WTC11 (cell line): ENCODE measurements at regions of chr13 and their contacts with region 1.

Region 1: DNA sequence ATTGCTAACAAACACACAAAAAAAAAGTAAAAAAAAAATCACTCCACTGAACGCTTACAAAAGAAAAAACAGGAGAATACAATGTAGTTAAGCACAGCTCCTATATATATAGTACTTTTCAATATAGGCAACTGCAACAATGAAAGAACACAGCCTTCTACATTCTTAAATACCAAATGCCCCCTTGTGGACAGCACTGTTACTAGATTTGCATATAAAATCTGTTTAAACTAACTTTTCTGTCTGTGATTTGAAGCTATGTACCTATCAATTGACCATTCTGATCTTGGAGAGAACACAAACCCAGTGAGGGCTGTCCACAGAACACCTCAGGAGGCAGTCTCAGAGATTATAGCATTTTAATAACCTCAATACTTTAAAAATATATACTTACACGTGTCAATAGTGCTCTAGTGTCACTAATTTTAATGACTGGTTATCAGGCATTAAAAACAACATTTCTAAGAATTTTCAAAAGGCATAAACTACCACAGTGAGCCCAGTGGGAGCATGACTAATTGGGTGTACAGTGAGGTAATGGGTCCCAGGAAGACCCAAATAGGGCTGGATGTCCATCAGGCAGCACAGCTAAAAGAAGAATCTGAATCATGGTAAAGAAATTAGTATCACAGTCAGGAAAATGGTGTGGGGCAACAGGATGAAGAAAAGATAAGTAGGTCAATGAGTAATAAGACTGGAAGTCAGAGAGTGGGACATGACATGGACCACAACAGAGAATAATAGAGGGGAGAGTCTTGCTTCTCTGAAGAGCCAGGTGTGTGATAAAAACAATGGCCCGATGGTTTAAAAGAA is 22.2 kb downstream of the CCDC169 start:
- DNase-seq: no peak
- ATAC-seq: 0 out of 2 replicates have a peak, but pooled peaks have one; percentile 57
- H3K4me3 Mint-ChIP-seq: no peak overlapping the region
- H3K27ac Mint-ChIP-seq: no peak overlapping the region
- H3K4me1 Mint-ChIP-seq: peaks cover 2% of the 10 kb centered on the region
- H3K27me3 Mint-ChIP-seq: no peaks in the 10 kb centered on the region
- CTCF ChIP-seq: peak; percentile 55; the same call in 1 of the 2 replicates

Region 2: GRCh38 chr13:35978603-35979316 is 296.6 kb before region 1 on chr13:
- CTCF ChIA-PET with region 1: interaction called, 43 read pairs
- POLR2A ChIA-PET with region 1: no interaction called
- DNase-seq: peak; percentile 27
- ATAC-seq: peak; percentile 49; the same call in 1 of the 2 replicates
- H3K4me3 Mint-ChIP-seq: no peak overlapping the region
- H3K27ac Mint-ChIP-seq: no peak overlapping the region
- H3K4me1 Mint-ChIP-seq: peaks cover 16% of the 10 kb centered on the region
- H3K27me3 Mint-ChIP-seq: no peaks in the 10 kb centered on the region
- CTCF ChIP-seq: peak; percentile 85

Region 3: DNA sequence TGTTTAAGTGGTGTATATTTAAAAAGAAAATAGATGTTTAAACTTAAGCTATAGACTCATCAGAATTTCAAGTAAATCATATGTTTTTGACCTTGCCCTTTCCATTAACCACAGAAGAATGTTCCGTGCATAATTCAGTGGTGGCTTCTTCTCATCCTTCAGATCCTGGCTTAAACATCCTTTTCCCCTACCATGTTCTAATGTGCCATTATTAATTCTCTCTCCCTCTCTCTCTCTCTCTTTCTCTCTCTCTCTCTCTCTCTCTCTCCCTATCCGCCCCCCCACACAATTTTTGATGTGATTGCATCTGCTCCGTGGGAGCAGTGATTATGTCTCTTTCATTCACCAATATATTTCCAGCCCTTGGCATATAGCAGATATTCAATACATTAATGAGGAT is 260.6 kb before region 1 on chr13:
- CTCF ChIA-PET with region 1: no interaction called
- POLR2A ChIA-PET with region 1: no interaction called
- DNase-seq: no peak
- ATAC-seq: no peak
- H3K4me3 Mint-ChIP-seq: no peak overlapping the region
- H3K27ac Mint-ChIP-seq: no peak overlapping the region; the same call in 1 of the 2 replicates
- H3K4me1 Mint-ChIP-seq: peaks cover 20% of the 10 kb centered on the region
- H3K27me3 Mint-ChIP-seq: no peaks in the 10 kb centered on the region
- CTCF ChIP-seq: no peak